ENCODE measurements at regions of chr14 and their contacts with region 1.

Region 1: GRCh38 chr14:52131640-52132320 is 62.9 kb upstream of the NID2 start:
- DNase-seq: peak; percentile 93
- H3K4me3 ChIP-seq: no peak overlapping the region
- H3K27ac ChIP-seq: no peak overlapping the region
- H3K4me1 ChIP-seq: no peaks in the 10 kb centered on the region
- H3K27me3 ChIP-seq: no peaks in the 10 kb centered on the region
- CTCF ChIP-seq: peak; percentile 80

Region 2: GRCh38 chr14:51293149-51293911 is 838.5 kb before region 1 on chr14:
- CTCF ChIA-PET with region 1: no interaction called
- POLR2A ChIA-PET with region 1: no interaction called
- intact Hi-C with region 1: loop called (anchors 5 kb)
- DNase-seq: no peak
- H3K4me3 ChIP-seq: no peak overlapping the region
- H3K27ac ChIP-seq: no peak overlapping the region
- H3K4me1 ChIP-seq: no peaks in the 10 kb centered on the region
- H3K27me3 ChIP-seq: no peaks in the 10 kb centered on the region
- CTCF ChIP-seq: no peak

Region 3: DNA sequence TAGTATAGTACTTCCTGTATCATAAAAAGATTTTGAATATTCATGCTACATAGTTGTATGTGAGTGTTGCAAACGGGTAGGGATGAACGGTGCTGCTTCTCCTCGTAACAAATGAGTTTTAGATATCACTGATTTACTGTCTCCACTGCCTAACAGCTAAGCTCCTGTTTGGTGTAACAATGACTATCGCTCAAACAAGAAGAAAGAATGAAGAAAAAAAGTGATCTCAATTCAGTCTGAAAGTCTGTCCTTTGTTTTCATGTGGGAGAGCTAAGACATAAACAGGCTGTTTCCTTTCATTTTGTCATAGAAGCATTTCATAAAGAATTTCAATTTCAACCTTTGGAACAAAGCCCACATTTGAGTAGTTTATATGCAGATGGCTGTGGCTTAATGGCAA is 168.5 kb before region 1 on chr14:
- CTCF ChIA-PET with region 1: no interaction called
- POLR2A ChIA-PET with region 1: no interaction called
- intact Hi-C with region 1: no loop called
- DNase-seq: peak; percentile 56
- H3K4me3 ChIP-seq: peak overlapping the region; percentile 20
- H3K27ac ChIP-seq: peak overlapping the region; percentile 54
- H3K4me1 ChIP-seq: peaks cover 16% of the 10 kb centered on the region
- H3K27me3 ChIP-seq: no peaks in the 10 kb centered on the region
- CTCF ChIP-seq: no peak

Region 4: DNA sequence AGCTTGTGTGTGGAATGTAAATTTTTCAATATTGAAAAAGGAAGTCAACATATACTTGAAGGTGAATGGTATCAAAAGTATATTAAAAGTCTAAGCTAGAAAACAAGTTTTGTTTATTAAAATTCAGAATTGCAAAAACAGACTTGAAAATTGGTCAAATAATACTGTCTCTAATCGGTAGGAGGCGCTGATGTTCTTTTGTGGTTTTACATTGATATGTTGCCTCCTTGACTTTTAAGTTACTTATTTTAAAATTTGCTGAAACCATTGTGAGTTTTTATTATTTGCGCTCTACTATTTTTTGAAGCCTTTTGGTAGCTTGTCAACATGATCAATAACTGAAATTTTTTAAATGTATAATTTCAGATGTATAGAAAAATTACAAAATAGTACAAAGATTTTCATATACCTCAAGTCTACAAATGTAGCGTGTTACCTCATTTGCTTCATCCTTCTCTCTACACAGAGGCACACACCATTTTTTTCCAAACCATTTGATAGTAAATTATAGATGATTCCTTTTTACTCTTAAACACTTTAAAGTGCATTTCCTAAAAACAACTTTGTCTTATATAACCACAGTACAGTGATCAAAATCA is 135.5 kb before region 1 on chr14:
- CTCF ChIA-PET with region 1: no interaction called
- POLR2A ChIA-PET with region 1: no interaction called
- intact Hi-C with region 1: loop called (anchors 2 kb)
- DNase-seq: peak; percentile 53
- H3K4me3 ChIP-seq: no peak overlapping the region
- H3K27ac ChIP-seq: no peak overlapping the region
- H3K4me1 ChIP-seq: peaks cover 5% of the 10 kb centered on the region
- H3K27me3 ChIP-seq: no peaks in the 10 kb centered on the region
- CTCF ChIP-seq: peak; percentile 80

Measured in A673 (cell line).